ENCODE measurements at regions of chr20 and their contacts with region 1.

Region 1: GRCh38 chr20:23349338-23350195 is 1.0 kb upstream of the NXT1 start:
- DNase-seq: peak in 4 of 6 donors; percentile 64 to 80 (median 77)
- ATAC-seq: peak; percentile 73 to 86 (median 76)
- H3K4me3 ChIP-seq: peak overlapping the region; percentile 94 to 98 (median 96)
- H3K27ac ChIP-seq: peak overlapping the region; percentile 88 to 99 (median 98)
- H3K4me1 ChIP-seq: peaks cover 6 to 15% (median 11%) of the 10 kb centered on the region in 3 donors
- H3K27me3 ChIP-seq: no peaks in the 10 kb centered on the region
- CTCF ChIP-seq: peak in 2 of 4 donors; percentile 16 to 21

Region 2: GRCh38 chr20:22691369-22692118 is 658.0 kb before region 1 on chr20:
- intact Hi-C with region 1: loop called in 1 of 3 experiments (anchors 10 kb)
- DNase-seq: peak; percentile 61 to 91 (median 79)
- ATAC-seq: peak; percentile 93 to 100 (median 98)
- H3K4me3 ChIP-seq: no peak overlapping the region
- H3K27ac ChIP-seq: no peak overlapping the region
- H3K4me1 ChIP-seq: no peaks in the 10 kb centered on the region
- H3K27me3 ChIP-seq: peaks cover 0 to 4% (median 0%) of the 10 kb centered on the region in 4 donors
- CTCF ChIP-seq: peak; percentile 83 to 93 (median 90)

Measured in pancreas (tissue), 10 donors.